Common myeloid progenitor, CD34-positive (primary cell): ENCODE measurements at regions of chr9 and their contacts with region 1.

Region 1: GRCh38 chr9:129460323-129461261 is 160.3 kb downstream of the C9orf50 start:
- DNase-seq: peak; percentile 97 to 98 (median 97)
- H3K4me3 ChIP-seq: peak overlapping the region in 5 of 7 experiments; percentile 38 to 74 (median 62)
- H3K27ac ChIP-seq: peak overlapping the region; percentile 86 to 97
- H3K4me1 ChIP-seq: peaks cover 2 to 61% (median 46%) of the 10 kb centered on the region in 4 experiments
- H3K27me3 ChIP-seq: no peaks in the 10 kb centered on the region

Region 2: GRCh38 chr9:129383561-129384416 is 76.8 kb before region 1 on chr9:
- CTCF ChIA-PET with region 1: interaction called, 3 read pairs
- POLR2A ChIA-PET with region 1: interaction called, 12 read pairs
- DNase-seq: peak; percentile 90 to 95 (median 93)
- H3K4me3 ChIP-seq: peak overlapping the region; percentile 37 to 75 (median 59)
- H3K27ac ChIP-seq: peak overlapping the region; percentile 84 to 90
- H3K4me1 ChIP-seq: peaks cover 0 to 21% (median 18%) of the 10 kb centered on the region in 4 experiments
- H3K27me3 ChIP-seq: no peaks in the 10 kb centered on the region

Region 3: GRCh38 chr9:129436751-129437625 is 23.6 kb before region 1 on chr9:
- CTCF ChIA-PET with region 1: interaction called, 4 read pairs
- POLR2A ChIA-PET with region 1: interaction called, 10 read pairs
- DNase-seq: peak; percentile 52 to 84 (median 74)
- H3K4me3 ChIP-seq: peak overlapping the region; percentile 18 to 81 (median 62)
- H3K27ac ChIP-seq: no peak overlapping the region
- H3K4me1 ChIP-seq: peaks cover 0 to 36% (median 29%) of the 10 kb centered on the region in 4 experiments
- H3K27me3 ChIP-seq: peaks cover 0 to 22% (median 8%) of the 10 kb centered on the region in 5 experiments

Region 4: DNA sequence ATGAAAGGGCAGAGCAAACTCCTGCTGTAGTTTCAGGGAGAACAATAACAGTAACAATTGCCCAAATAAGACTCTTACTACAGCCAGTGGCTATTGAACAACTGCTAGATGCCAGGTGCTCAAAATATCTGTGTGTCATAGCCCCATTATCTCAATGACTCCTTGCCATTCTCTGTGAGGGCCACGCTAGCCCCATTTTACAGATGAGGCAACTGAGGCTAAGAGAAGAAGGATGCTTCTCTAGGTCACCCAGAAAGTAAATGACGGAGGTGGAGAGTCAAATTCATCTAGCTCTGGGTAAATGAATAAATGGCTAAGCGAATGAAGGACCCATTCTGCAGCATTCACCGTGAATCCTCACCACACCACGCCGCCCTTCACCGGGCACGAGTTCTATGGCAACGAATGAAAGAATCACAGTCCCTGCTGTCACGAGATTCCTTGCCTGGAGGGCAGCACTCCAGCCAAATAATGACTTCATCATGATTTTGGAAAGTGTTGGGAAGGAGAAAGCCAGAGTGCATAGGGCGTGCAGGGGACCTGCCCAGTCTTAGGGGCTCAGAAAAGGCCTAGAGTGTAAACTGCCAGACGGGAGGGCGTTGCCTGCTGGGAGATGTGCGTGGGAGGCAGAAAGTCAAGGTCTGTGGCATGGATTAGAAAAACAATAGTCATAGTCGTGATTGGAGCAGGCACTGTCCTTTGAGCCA is 13.1 kb after region 1 on chr9:
- CTCF ChIA-PET with region 1: interaction called, 11 read pairs
- POLR2A ChIA-PET with region 1: interaction called, 3 read pairs
- DNase-seq: no peak
- H3K4me3 ChIP-seq: no peak overlapping the region
- H3K27ac ChIP-seq: no peak overlapping the region
- H3K4me1 ChIP-seq: peaks cover 0 to 62% (median 30%) of the 10 kb centered on the region in 4 experiments
- H3K27me3 ChIP-seq: no peaks in the 10 kb centered on the region

Region 5: DNA sequence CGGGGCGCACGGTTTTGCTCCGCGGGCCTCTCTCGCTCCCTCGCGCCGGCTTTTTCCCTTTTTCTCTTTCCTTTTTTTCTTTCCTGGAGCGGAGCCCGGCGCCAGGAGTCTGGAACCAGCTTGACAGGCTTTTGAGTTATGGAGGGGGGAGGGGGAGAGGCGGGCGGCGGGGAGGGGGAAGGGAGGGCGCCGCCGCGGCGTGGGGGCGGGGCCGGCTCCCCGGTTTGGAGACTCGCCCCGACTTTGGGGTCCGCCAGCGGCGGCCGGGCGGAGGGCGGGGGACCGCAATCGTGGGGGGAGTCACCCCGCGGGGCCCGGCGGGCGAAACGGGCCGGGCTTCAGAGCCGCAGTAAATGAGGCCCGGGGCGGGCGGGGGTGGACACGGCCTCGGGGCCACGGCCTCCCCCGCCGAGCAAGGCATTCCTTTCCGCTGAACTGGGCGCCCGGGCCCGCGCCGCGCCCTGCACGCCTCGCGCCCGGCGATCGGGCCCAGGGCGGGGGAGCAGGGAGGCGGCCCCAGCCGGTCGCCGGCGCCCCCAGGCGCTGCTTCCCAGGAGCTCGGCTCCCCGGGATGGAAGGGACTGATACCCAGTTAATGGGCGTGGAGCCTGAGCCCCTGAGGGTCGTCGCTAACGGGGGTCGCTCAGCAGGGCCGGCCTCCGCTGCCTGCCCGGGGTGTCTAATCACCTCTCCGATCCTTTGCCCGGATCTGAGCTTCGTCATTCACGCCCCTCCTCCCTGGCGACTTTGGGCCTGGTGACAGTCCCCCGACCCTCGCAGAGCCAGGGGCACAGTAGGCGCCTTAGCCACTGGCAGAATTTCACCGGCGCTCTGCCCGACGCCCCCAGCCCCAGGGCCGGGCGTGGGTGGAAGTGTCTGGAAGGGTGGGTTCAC is 22.2 kb after region 1 on chr9:
- CTCF ChIA-PET with region 1: interaction called, 6 read pairs
- POLR2A ChIA-PET with region 1: interaction called, 23 read pairs
- DNase-seq: peak in 2 of 3 donors; percentile 60 to 72
- H3K4me3 ChIP-seq: peak overlapping the region in 5 of 7 experiments; percentile 15 to 72 (median 59)
- H3K27ac ChIP-seq: peak overlapping the region in 1 of 2 experiments; percentile 77
- H3K4me1 ChIP-seq: peaks cover 0 to 36% (median 28%) of the 10 kb centered on the region in 4 experiments
- H3K27me3 ChIP-seq: no peaks in the 10 kb centered on the region

Region 6: GRCh38 chr9:129495534-129496325 is 35.1 kb after region 1 on chr9:
- CTCF ChIA-PET with region 1: interaction called, 14 read pairs
- POLR2A ChIA-PET with region 1: interaction called, 5 read pairs
- DNase-seq: peak; percentile 78 to 91 (median 91)
- H3K4me3 ChIP-seq: peak overlapping the region; percentile 9 to 83 (median 73)
- H3K27ac ChIP-seq: peak overlapping the region in 1 of 2 experiments; percentile 73
- H3K4me1 ChIP-seq: peaks cover 0 to 60% (median 35%) of the 10 kb centered on the region in 4 experiments
- H3K27me3 ChIP-seq: no peaks in the 10 kb centered on the region

Region 7: GRCh38 chr9:129597355-129598088 is 136.9 kb after region 1 on chr9:
- CTCF ChIA-PET with region 1: no interaction called
- POLR2A ChIA-PET with region 1: no interaction called
- DNase-seq: peak in 2 of 3 donors; percentile 42 to 48
- H3K4me3 ChIP-seq: peak overlapping the region in 5 of 7 experiments; percentile 13 to 70 (median 54)
- H3K27ac ChIP-seq: no peak overlapping the region
- H3K4me1 ChIP-seq: peaks cover 0 to 42% (median 39%) of the 10 kb centered on the region in 4 experiments
- H3K27me3 ChIP-seq: peaks cover 0 to 10% (median 2%) of the 10 kb centered on the region in 5 experiments